Calu3 (cell line): ENCODE measurements at regions of chr3 and their contacts with region 1.

Region 1: DNA sequence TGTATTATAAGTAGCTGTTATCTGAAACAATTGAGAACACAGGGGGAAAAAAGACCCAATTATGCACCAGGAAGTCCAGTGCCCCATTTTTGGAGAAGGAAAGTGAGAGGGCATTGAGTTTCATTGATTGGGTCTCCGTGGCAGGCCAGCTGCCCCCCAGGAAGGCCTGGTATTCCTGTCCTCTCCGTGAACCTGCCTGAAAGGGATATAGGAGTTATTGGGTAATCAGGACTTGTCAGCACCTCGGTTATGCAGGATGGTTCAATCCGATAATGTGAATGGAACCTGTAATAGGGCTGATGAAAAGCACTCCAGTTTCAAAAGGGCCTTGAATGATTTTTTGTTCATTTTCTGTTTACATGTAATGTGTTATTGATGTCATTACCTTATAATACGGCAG is 122.0 kb upstream of the RARB start:
- DNase-seq: peak; percentile 70
- H3K4me3 Mint-ChIP-seq: peak overlapping the region; percentile 22
- H3K27ac Mint-ChIP-seq: peak overlapping the region; percentile 52
- H3K4me1 Mint-ChIP-seq: peaks cover 19% of the 10 kb centered on the region
- H3K27me3 Mint-ChIP-seq: no peaks in the 10 kb centered on the region
- CTCF ChIP-seq: no peak

Region 2: GRCh38 chr3:25021816-25022215 is 284.2 kb before region 1 on chr3:
- CTCF ChIA-PET with region 1: interaction called, 6 read pairs
- intact Hi-C with region 1: loop called (anchors 10 kb)
- DNase-seq: peak; percentile 5
- H3K4me3 Mint-ChIP-seq: no peak overlapping the region
- H3K27ac Mint-ChIP-seq: no peak overlapping the region
- H3K4me1 Mint-ChIP-seq: no peaks in the 10 kb centered on the region
- H3K27me3 Mint-ChIP-seq: no peaks in the 10 kb centered on the region
- CTCF ChIP-seq: peak; percentile 17

Region 3: GRCh38 chr3:25293731-25294130 is 12.3 kb before region 1 on chr3:
- CTCF ChIA-PET with region 1: no interaction called
- intact Hi-C with region 1: no loop called
- DNase-seq: peak; percentile 10
- H3K4me3 Mint-ChIP-seq: no peak overlapping the region
- H3K27ac Mint-ChIP-seq: no peak overlapping the region
- H3K4me1 Mint-ChIP-seq: peaks cover 37% of the 10 kb centered on the region
- H3K27me3 Mint-ChIP-seq: no peaks in the 10 kb centered on the region
- CTCF ChIP-seq: no peak